CD4-positive, alpha-beta memory T cell (primary cell): ENCODE measurements at regions of chr2 and their contacts with region 1.

Region 1: DNA sequence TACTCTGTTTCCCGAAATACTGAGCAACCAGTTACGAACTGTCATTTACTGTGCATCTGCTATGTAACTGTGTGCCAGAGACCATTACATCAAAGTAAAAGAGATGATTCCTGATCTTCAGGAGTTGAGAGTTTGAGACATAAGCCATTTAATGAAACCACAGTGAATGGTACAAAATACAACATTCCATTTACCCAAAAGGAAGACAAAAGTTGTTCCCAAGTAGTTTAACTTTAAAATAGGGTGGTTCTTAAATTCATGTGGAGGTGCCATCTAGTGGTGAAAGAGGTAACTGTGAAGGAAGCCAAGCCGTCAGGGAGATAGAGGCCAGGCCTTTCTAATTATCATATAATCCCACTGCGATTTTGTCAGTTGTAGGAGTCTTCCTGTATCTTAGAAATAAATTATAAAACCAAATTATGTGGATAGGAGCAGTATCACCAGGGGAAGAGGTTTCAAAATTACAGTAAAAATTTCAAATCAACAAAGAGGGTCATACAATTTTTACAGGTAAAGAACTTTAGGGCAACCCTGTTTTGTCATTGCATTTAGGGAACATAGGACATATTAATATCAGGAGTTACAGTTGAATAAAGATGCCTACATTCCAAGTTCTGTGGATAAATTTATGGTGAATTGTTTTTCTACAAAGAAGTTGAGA is 67.7 kb downstream of the EPAS1 start:
- DNase-seq: peak; percentile 46 to 62 (median 52)
- H3K4me3 ChIP-seq: no peak overlapping the region
- H3K4me3 Mint-ChIP-seq: no peak overlapping the region
- H3K27ac ChIP-seq: no peak overlapping the region
- H3K27ac Mint-ChIP-seq: peak overlapping the region in 1 of 7 donors; percentile 3
- H3K4me1 ChIP-seq: peaks cover 22% of the 10 kb centered on the region
- H3K4me1 Mint-ChIP-seq: peaks cover 22 to 42% (median 34%) of the 10 kb centered on the region in 4 donors
- H3K27me3 ChIP-seq: no peaks in the 10 kb centered on the region
- H3K27me3 Mint-ChIP-seq: no peaks in the 10 kb centered on the region

Region 2: DNA sequence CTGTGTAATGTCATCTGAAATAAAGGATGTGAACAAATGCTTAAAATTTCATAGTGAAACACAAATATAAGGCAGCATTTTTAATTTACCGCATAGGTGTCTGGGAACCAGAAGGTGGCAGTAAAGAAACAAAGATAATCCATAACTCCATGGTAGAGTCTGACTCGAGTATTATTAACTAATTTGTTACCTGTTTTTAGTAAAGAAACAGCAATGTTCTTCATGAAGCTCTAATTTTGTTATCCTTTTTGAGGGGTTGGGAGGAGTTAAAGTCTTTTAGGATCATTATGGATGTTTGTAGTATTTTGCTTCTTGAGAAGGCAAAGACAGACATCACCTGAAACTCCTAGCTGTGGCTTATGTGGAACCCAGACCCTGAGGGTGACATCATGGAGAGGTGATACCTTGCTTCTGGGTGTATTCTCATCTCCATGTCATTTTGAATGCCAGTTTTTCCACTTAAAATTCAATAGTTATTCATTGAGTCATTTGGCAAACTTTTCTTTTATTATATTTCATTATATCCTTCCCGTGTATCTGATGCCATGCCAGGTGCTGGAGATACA is 353.9 kb before region 1 on chr2:
- CTCF ChIA-PET with region 1: interaction called, 6 read pairs
- POLR2A ChIA-PET with region 1: no interaction called
- intact Hi-C with region 1: loop called (anchors 1 kb)
- DNase-seq: peak in 4 of 5 donors; percentile 21 to 35 (median 30)
- H3K4me3 ChIP-seq: no peak overlapping the region
- H3K4me3 Mint-ChIP-seq: no peak overlapping the region
- H3K27ac ChIP-seq: no peak overlapping the region
- H3K27ac Mint-ChIP-seq: no peak overlapping the region
- H3K4me1 ChIP-seq: no peaks in the 10 kb centered on the region
- H3K4me1 Mint-ChIP-seq: no peaks in the 10 kb centered on the region
- H3K27me3 ChIP-seq: no peaks in the 10 kb centered on the region
- H3K27me3 Mint-ChIP-seq: no peaks in the 10 kb centered on the region

Region 3: DNA sequence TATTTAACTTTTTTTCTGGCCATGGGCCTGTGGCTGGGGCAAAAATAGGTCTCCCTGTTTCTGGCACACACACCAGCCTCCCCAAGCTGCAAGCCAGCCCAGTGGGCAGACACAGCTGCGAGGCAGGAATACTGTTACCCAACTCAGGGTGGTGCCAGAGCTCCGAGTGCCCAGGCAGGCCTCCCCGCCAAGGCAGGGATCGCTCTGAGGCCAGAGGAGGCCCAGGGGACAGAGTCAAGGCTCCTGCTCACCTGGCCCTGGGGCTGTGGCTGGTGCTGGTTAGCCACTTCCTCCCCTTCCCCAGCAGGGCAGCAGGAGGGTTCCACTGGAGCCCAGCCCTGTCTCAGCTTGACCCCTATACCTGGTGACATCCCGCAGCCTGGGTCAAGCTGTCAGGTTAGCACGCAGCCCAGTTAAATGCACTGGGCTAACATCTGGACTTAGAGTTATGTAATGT is 134.8 kb before region 1 on chr2:
- CTCF ChIA-PET with region 1: interaction called, 4 read pairs
- POLR2A ChIA-PET with region 1: no interaction called
- intact Hi-C with region 1: loop called (anchors 2 kb)
- DNase-seq: peak in 3 of 5 donors; percentile 11 to 48 (median 26)
- H3K4me3 ChIP-seq: no peak overlapping the region
- H3K4me3 Mint-ChIP-seq: peak overlapping the region in 6 of 8 donors; percentile 55 to 79 (median 68)
- H3K27ac ChIP-seq: no peak overlapping the region
- H3K27ac Mint-ChIP-seq: peak overlapping the region; percentile 9 to 96 (median 88)
- H3K4me1 ChIP-seq: peaks cover 21% of the 10 kb centered on the region
- H3K4me1 Mint-ChIP-seq: peaks cover 17 to 33% (median 24%) of the 10 kb centered on the region in 4 donors
- H3K27me3 ChIP-seq: no peaks in the 10 kb centered on the region
- H3K27me3 Mint-ChIP-seq: peaks cover 1% of the 10 kb centered on the region in 2 donors

Region 4: DNA sequence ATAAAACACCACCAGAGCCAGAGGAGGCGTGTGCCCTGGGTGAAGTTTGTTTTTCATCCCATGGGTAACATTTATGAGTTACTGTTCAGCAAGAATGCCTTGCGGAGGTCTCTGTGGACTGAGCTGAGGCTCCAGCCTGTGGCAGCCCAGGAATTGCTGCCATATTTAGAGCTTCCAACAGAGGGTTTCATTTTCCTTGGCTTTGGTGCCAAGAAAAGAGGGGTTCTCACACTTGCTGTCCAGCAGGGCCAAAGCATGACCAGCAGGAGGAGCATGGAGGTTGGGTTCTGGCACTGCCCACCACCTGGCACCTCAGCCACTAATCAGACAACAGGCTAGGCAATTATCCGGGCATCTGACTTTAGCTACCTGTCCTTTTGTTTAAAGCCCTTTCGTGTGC is 31.0 kb before region 1 on chr2:
- CTCF ChIA-PET with region 1: interaction called, 9 read pairs
- POLR2A ChIA-PET with region 1: no interaction called
- intact Hi-C with region 1: loop called (anchors 1 kb)
- DNase-seq: no peak
- H3K4me3 ChIP-seq: no peak overlapping the region
- H3K4me3 Mint-ChIP-seq: no peak overlapping the region
- H3K27ac ChIP-seq: no peak overlapping the region
- H3K27ac Mint-ChIP-seq: no peak overlapping the region
- H3K4me1 ChIP-seq: no peaks in the 10 kb centered on the region
- H3K4me1 Mint-ChIP-seq: peaks cover 0 to 33% (median 8%) of the 10 kb centered on the region in 4 donors
- H3K27me3 ChIP-seq: no peaks in the 10 kb centered on the region
- H3K27me3 Mint-ChIP-seq: peaks cover 0 to 6% of the 10 kb centered on the region in 2 donors

Region 5: GRCh38 chr2:46383739-46384456 is 19.0 kb after region 1 on chr2:
- CTCF ChIA-PET with region 1: no interaction called
- POLR2A ChIA-PET with region 1: no interaction called
- intact Hi-C with region 1: no loop called
- DNase-seq: no peak
- H3K4me3 ChIP-seq: no peak overlapping the region
- H3K4me3 Mint-ChIP-seq: no peak overlapping the region
- H3K27ac ChIP-seq: no peak overlapping the region
- H3K27ac Mint-ChIP-seq: peak overlapping the region in 1 of 7 donors; percentile 29
- H3K4me1 ChIP-seq: no peaks in the 10 kb centered on the region
- H3K4me1 Mint-ChIP-seq: peaks cover 0 to 3% (median 0%) of the 10 kb centered on the region in 4 donors
- H3K27me3 ChIP-seq: no peaks in the 10 kb centered on the region
- H3K27me3 Mint-ChIP-seq: no peaks in the 10 kb centered on the region

Region 6: GRCh38 chr2:46461011-46461674 is 96.2 kb after region 1 on chr2:
- CTCF ChIA-PET with region 1: interaction called, 9 read pairs
- POLR2A ChIA-PET with region 1: no interaction called
- intact Hi-C with region 1: loop called (anchors 1 kb)
- DNase-seq: peak; percentile 53 to 71 (median 61)
- H3K4me3 ChIP-seq: no peak overlapping the region
- H3K4me3 Mint-ChIP-seq: no peak overlapping the region
- H3K27ac ChIP-seq: no peak overlapping the region
- H3K27ac Mint-ChIP-seq: peak overlapping the region in 2 of 7 donors; percentile 51 to 81
- H3K4me1 ChIP-seq: peaks cover 7% of the 10 kb centered on the region
- H3K4me1 Mint-ChIP-seq: peaks cover 4 to 12% (median 10%) of the 10 kb centered on the region in 4 donors
- H3K27me3 ChIP-seq: no peaks in the 10 kb centered on the region
- H3K27me3 Mint-ChIP-seq: peaks cover 0 to 2% of the 10 kb centered on the region in 2 donors

Region 7: GRCh38 chr2:47198985-47199451 is 834.1 kb after region 1 on chr2:
- CTCF ChIA-PET with region 1: no interaction called
- POLR2A ChIA-PET with region 1: no interaction called
- intact Hi-C with region 1: no loop called
- DNase-seq: no peak
- H3K4me3 ChIP-seq: no peak overlapping the region
- H3K4me3 Mint-ChIP-seq: no peak overlapping the region
- H3K27ac ChIP-seq: no peak overlapping the region
- H3K27ac Mint-ChIP-seq: no peak overlapping the region
- H3K4me1 ChIP-seq: no peaks in the 10 kb centered on the region
- H3K4me1 Mint-ChIP-seq: no peaks in the 10 kb centered on the region
- H3K27me3 ChIP-seq: no peaks in the 10 kb centered on the region
- H3K27me3 Mint-ChIP-seq: peaks cover 10 to 12% of the 10 kb centered on the region in 2 donors